ENCODE measurements at regions of chr20 and their contacts with region 1.

Region 1: DNA sequence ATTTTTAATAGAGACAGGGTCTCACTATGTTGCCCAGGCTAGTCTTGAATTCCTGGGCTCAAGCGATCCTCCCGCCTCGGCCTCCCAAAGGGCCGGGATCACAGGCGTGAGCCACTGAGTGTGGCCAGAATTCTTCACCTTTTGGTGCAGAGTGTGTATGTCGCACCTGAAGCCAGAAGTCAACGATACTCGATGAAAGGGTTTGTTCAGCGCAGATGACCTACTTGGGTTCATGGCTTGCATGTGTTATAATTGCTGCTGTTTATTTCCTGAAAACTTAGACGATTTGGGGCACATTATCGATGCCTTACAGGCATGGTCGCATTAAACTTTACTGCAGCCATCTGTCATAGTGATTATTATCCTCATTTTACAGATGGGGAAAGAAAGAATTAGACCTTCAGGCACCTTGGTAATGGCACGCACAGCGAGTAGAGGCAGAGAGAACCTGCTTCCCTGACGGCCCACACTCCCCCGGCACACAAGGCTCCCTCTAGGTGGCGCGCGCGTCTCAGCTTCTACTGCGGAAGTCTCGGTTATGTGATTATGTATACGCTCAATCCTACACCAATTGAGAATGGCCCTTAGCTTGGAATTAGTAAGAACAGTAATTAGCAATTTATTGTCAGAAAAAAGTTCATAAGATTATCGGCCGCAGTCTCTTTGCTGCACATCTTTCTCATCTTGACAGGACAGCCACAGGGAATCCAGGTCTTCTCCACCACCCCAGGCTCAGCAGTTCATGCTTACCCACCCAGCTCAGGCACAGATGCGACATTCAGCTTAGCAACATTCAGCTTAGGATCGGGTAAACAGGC is 212.8 kb upstream of the PROKR2 start:
- DNase-seq: peak; percentile 86
- H3K4me3 ChIP-seq: peak overlapping the region in 2 of 4 donors; percentile 11 to 25
- H3K27ac ChIP-seq: no peak overlapping the region
- H3K4me1 ChIP-seq: peaks cover 0 to 13% (median 10%) of the 10 kb centered on the region in 4 donors
- H3K27me3 ChIP-seq: no peaks in the 10 kb centered on the region
- CTCF ChIP-seq: peak; percentile 29 to 73 (median 56)
- EP300 ChIP-seq: no peak
- POLR2A ChIP-seq: no peak

Region 2: GRCh38 chr20:3606021-3606420 is 1923.5 kb before region 1 on chr20:
- intact Hi-C with region 1: no loop called
- DNase-seq: no peak
- H3K4me3 ChIP-seq: no peak overlapping the region
- H3K27ac ChIP-seq: no peak overlapping the region
- H3K4me1 ChIP-seq: no peaks in the 10 kb centered on the region
- H3K27me3 ChIP-seq: no peaks in the 10 kb centered on the region
- CTCF ChIP-seq: no peak
- EP300 ChIP-seq: no peak
- POLR2A ChIP-seq: no peak

Region 3: DNA sequence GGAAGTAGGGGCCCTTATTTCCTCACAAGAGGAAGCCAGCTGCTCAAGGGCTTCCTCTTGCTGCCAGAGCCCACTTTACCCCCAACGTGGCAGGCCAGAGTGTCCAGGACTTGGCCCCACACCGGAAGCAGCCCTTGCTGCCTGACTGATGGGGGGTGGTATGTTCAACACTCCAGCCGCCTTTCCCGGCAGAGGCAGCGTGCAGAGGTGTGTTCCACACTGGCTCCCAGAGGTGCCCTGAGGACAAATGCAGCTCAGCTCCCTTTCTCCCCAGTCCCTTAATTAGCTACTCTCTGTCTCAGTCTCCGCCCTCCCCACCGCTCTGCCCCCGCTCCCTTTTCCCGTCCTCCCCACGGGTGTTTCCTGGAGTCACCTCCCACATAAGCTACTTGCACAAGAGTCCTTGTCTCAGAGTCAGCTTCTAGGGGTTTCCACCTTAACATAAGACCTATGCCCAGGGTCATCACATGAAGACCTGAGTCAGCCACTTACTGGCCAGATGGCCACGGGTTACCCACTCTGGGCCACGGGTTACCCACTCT is 159.0 kb after region 1 on chr20:
- intact Hi-C with region 1: no loop called
- DNase-seq: no peak
- H3K4me3 ChIP-seq: no peak overlapping the region
- H3K27ac ChIP-seq: peak overlapping the region in 1 of 4 donors; percentile 55
- H3K4me1 ChIP-seq: no peaks in the 10 kb centered on the region
- H3K27me3 ChIP-seq: no peaks in the 10 kb centered on the region
- CTCF ChIP-seq: no peak
- EP300 ChIP-seq: no peak
- POLR2A ChIP-seq: no peak

Region 4: DNA sequence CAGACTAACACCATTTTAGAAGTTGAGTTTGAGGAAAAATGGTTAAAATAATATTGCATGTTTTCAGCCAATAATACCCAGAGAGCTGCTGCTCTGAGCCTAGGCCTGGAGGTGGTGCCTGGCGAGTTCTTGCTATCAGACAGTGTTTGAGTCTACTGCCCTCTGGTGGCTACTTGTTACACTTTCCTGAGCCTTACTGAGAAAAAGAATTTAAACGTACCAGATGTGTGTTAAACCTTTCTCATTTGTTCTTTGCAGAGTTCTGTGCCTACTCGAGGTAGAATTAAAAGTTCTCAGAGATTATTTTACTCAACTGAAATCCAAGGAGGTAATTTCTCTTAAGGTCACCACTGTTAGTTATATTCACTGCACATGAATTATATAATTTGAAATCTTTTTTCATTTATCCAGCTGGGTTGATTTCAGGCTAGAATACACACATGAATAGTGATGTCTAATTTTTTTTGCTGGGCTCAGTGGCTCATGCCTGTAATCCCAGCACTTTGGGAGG is 258.9 kb after region 1 on chr20:
- intact Hi-C with region 1: loop called (anchors 1 kb)
- DNase-seq: peak; percentile 86
- H3K4me3 ChIP-seq: no peak overlapping the region
- H3K27ac ChIP-seq: no peak overlapping the region
- H3K4me1 ChIP-seq: peaks cover 0 to 15% (median 8%) of the 10 kb centered on the region in 4 donors
- H3K27me3 ChIP-seq: no peaks in the 10 kb centered on the region
- CTCF ChIP-seq: peak; percentile 77 to 91 (median 82)
- EP300 ChIP-seq: no peak
- POLR2A ChIP-seq: no peak

Region 5: DNA sequence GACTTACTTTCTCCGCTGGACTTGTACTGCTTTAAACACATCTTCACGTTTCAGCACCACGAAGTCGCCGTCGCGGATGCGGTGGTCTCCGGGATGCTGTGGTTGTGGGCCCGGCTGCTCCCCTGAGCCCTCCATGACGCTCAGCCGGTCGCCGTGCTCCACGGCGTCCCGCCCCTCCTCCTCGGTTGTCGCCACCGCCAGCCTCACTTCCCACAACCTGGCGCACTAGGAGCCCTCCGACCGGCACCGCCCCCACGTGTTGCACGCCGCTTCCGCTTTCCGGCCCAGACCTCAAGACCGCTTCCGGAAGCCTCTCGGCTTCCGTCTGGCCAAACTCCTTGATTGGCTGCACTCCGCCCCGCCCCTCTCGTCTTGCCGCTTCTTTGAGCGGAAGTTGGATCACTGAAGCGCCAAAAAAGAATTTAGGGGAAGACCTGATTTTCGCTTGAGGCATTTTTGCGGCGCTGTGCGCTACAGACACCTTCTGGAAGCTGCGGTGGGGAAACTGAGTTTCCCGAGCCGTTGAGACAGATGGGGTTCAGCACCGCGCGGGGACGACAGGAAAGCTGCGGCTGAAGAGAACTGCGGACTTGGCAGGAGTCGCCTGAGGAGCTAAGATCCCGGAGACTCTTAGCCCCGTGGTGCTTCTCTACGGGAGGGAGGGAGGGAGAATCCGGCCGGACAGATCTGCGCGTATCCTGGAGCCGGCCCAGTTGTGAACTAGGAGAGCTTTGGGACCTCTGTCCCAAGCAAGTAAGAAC is 420.9 kb after region 1 on chr20 and contains the starts of genes MCM8 and TRMT6:
- intact Hi-C with region 1: loop called (anchors 5 kb)
- DNase-seq: peak; percentile 98
- H3K4me3 ChIP-seq: peak within 1 kb of the TSS; percentile 49 to 77 (median 60)
- H3K27ac ChIP-seq: peak within 1 kb of the TSS; percentile 73 to 85 (median 80)
- H3K4me1 ChIP-seq: peaks cover 0 to 25% (median 20%) of the 10 kb centered on the region in 4 donors
- H3K27me3 ChIP-seq: no peaks in the 10 kb centered on the region
- CTCF ChIP-seq: no peak
- EP300 ChIP-seq: peak in 1 of 4 donors; percentile 53
- POLR2A ChIP-seq: no peak
- total RNA-seq, gene MCM8: 4.6 to 8.0 (median 6.4) TPM
- total RNA-seq, gene TRMT6: 6.1 to 12.7 (median 8.4) TPM

Region 6: GRCh38 chr20:6074145-6074561 is 544.6 kb after region 1 on chr20:
- intact Hi-C with region 1: loop called (anchors 1 kb)
- DNase-seq: no peak
- H3K4me3 ChIP-seq: no peak overlapping the region
- H3K27ac ChIP-seq: no peak overlapping the region
- H3K4me1 ChIP-seq: peaks cover 0 to 12% (median 5%) of the 10 kb centered on the region in 4 donors
- H3K27me3 ChIP-seq: no peaks in the 10 kb centered on the region
- CTCF ChIP-seq: no peak
- EP300 ChIP-seq: no peak
- POLR2A ChIP-seq: no peak